ENCODE measurements at regions of chr2 and their contacts with region 1.

Region 1: GRCh38 chr2:227551836-227552235 is 46.9 kb upstream of the SCYGR2 start:
- DNase-seq: no peak
- ATAC-seq: no peak
- H3K4me3 ChIP-seq: no peak overlapping the region
- H3K27ac ChIP-seq: no peak overlapping the region
- H3K4me1 ChIP-seq: no peaks in the 10 kb centered on the region
- H3K27me3 ChIP-seq: no peaks in the 10 kb centered on the region
- CTCF ChIP-seq: no peak

Region 2: GRCh38 chr2:227351639-227352038 is 200.2 kb before region 1 on chr2:
- CTCF ChIA-PET with region 1: no interaction called
- POLR2A ChIA-PET with region 1: interaction called, 12 read pairs
- intact Hi-C with region 1: no loop called
- DNase-seq: no peak
- ATAC-seq: no peak
- H3K4me3 ChIP-seq: no peak overlapping the region
- H3K27ac ChIP-seq: no peak overlapping the region
- H3K4me1 ChIP-seq: peaks cover 15% of the 10 kb centered on the region
- H3K27me3 ChIP-seq: no peaks in the 10 kb centered on the region
- CTCF ChIP-seq: no peak

Region 3: GRCh38 chr2:227534714-227535113 is 17.1 kb before region 1 on chr2:
- CTCF ChIA-PET with region 1: no interaction called
- POLR2A ChIA-PET with region 1: interaction called, 20 read pairs
- intact Hi-C with region 1: no loop called
- DNase-seq: no peak
- ATAC-seq: no peak
- H3K4me3 ChIP-seq: no peak overlapping the region
- H3K27ac ChIP-seq: no peak overlapping the region
- H3K4me1 ChIP-seq: no peaks in the 10 kb centered on the region
- H3K27me3 ChIP-seq: no peaks in the 10 kb centered on the region
- CTCF ChIP-seq: no peak